Activated CD4-positive, alpha-beta T cell treated with anti-CD3 and anti-CD28 coated beads for 36 hours (primary cell): ENCODE measurements at regions of chr6 and their contacts with region 1.

Region 1: DNA sequence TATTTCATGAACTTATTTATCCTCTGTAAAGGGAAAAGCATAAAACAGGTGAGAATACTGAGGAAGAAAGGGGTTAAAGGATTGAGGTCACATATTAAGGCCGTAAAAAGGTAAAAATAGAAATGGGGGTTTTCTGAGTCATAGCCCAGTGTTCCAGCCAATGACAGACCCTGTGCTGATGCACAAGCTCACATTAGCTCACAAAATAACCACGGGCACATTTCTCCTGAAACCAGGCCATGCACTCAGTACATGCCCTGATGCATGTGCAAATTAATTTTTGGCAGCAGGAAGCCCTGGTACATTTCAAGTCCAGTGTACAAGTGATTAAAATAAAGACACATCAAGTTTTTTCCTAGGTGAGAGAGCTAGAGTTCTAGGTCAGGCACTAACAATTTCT is 194.4 kb downstream of the TMEM200A start:
- DNase-seq: no peak
- ATAC-seq: no peak
- H3K4me3 Mint-ChIP-seq: no peak overlapping the region
- H3K27ac Mint-ChIP-seq: no peak overlapping the region
- H3K4me1 Mint-ChIP-seq: peaks cover 22% of the 10 kb centered on the region
- H3K27me3 Mint-ChIP-seq: no peaks in the 10 kb centered on the region

Region 2: GRCh38 chr6:130625825-130626527 is 65.7 kb after region 1 on chr6:
- CTCF ChIA-PET with region 1: no interaction called
- POLR2A ChIA-PET with region 1: no interaction called
- intact Hi-C with region 1: loop called in 1 of 2 experiments (anchors 5 kb)
- DNase-seq: peak; percentile 25
- ATAC-seq: peak; percentile 66
- H3K4me3 Mint-ChIP-seq: no peak overlapping the region
- H3K27ac Mint-ChIP-seq: no peak overlapping the region
- H3K4me1 Mint-ChIP-seq: peaks cover 26% of the 10 kb centered on the region
- H3K27me3 Mint-ChIP-seq: no peaks in the 10 kb centered on the region

Region 3: DNA sequence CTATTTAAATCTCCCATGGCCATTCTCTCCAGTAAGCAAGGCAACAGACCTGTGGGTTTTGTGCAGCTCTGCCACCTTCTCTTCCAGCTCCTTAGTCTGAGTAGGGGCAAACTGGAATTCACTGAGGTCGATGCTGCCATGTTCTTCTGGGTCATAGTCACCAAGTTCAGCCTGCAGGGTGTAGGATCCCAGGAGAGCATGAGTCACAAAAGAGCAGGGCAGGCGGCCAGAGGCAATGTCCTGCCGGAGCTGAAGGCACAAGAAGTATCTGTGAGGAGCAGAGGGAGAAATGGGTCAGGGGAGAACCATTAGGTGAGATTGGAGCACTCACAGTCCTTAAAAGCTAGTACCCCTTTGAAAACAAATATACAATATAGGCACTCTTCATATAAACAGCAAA is 340.7 kb after region 1 on chr6:
- CTCF ChIA-PET with region 1: no interaction called
- POLR2A ChIA-PET with region 1: no interaction called
- intact Hi-C with region 1: no loop called
- DNase-seq: no peak
- ATAC-seq: no peak
- H3K4me3 Mint-ChIP-seq: no peak overlapping the region
- H3K27ac Mint-ChIP-seq: no peak overlapping the region
- H3K4me1 Mint-ChIP-seq: no peaks in the 10 kb centered on the region
- H3K27me3 Mint-ChIP-seq: no peaks in the 10 kb centered on the region